B cell (primary cell): ENCODE measurements at regions of chr1 and their contacts with region 1.

Region 1: DNA sequence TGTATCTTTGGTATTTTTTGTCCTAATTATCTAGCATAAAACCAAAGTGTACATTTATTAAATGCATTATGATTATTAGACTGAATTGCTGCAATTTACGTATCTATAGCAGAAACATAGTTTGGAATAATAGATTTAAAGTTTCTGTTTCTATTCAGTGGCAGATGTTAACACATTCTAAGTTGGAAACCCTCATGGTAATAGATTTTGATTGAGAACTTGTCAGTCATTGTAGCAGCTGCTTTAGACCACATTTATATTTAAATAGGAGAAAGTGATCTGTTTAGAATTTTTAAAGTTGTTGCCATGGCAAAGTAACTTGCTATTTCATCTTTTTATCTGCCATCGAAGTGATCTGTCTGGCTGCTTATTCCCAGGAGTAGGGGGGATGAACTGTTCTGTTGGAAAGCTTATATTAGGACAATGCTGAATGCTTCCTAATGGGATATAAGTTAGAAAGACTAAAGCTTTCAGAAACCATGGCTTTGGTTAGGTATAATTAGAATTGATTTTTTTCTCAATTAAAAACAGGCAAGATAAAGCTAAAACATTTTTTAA is 61.6 kb downstream of the HS2ST1 start:
- DNase-seq: no peak
- ATAC-seq: no peak
- H3K4me3 ChIP-seq: no peak overlapping the region
- H3K4me3 Mint-ChIP-seq: no peak overlapping the region
- H3K27ac ChIP-seq: no peak overlapping the region
- H3K27ac Mint-ChIP-seq: no peak overlapping the region
- H3K4me1 ChIP-seq: no peaks in the 10 kb centered on the region
- H3K4me1 Mint-ChIP-seq: peaks cover 11% of the 10 kb centered on the region
- H3K27me3 ChIP-seq: no peaks in the 10 kb centered on the region
- H3K27me3 Mint-ChIP-seq: no peaks in the 10 kb centered on the region
- CTCF ChIP-seq: no peak

Region 2: GRCh38 chr1:86866665-86867064 is 109.4 kb before region 1 on chr1:
- CTCF ChIA-PET with region 1: no interaction called
- POLR2A ChIA-PET with region 1: no interaction called
- intact Hi-C with region 1: no loop called
- DNase-seq: no peak
- ATAC-seq: peak; percentile 19
- H3K4me3 ChIP-seq: peak overlapping the region in 1 of 5 experiments; percentile 41
- H3K4me3 Mint-ChIP-seq: peak overlapping the region; percentile 78
- H3K27ac ChIP-seq: peak overlapping the region; percentile 37 to 74
- H3K27ac Mint-ChIP-seq: peak overlapping the region; percentile 92
- H3K4me1 ChIP-seq: peaks cover 20 to 27% of the 10 kb centered on the region in 2 donors
- H3K4me1 Mint-ChIP-seq: peaks cover 42% of the 10 kb centered on the region
- H3K27me3 ChIP-seq: no peaks in the 10 kb centered on the region
- H3K27me3 Mint-ChIP-seq: no peaks in the 10 kb centered on the region
- CTCF ChIP-seq: no peak

Region 3: DNA sequence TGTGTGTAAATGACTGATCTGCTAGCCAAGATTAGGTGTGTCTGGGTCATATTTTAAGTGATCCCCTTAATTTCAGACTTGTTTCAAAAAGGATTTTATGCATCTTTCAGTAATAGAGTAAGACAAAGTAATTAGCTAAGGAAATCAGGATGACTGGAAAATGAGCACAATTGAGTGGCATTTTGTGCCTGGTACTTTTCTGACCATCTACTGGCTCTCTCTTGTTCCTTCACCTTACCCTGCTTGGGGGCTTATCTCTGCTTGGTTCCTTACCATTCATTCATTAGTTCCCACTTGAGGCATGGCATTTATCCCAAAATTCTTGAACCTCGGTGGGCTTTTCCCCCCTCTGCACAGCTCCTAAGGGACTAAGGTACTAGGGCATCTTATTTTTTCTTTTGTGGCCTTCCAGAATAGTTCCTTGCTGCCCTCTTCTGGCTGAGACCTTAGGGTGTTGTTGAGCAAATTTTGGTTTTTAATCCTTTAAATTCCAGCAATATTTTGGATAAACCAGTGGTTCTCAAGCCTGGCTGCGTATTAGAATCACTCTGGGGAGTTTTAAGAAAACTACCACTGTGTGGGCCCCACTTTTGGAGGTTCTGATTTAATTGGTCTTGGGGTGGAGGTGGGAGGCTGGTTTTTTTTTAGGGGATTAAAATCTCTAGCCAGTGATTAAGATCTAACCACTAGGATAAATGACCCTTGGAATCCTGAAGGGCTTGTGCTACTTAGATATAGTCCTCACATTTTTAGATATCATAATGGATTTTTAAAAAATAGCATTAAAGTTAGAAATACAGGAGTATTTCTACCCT is 10.9 kb before region 1 on chr1:
- CTCF ChIA-PET with region 1: interaction called, 11 read pairs
- POLR2A ChIA-PET with region 1: no interaction called
- intact Hi-C with region 1: no loop called
- DNase-seq: peak; percentile 48
- ATAC-seq: peak; percentile 28
- H3K4me3 ChIP-seq: no peak overlapping the region
- H3K4me3 Mint-ChIP-seq: no peak overlapping the region
- H3K27ac ChIP-seq: no peak overlapping the region
- H3K27ac Mint-ChIP-seq: peak overlapping the region; percentile 59
- H3K4me1 ChIP-seq: peaks cover 0 to 9% of the 10 kb centered on the region in 2 donors
- H3K4me1 Mint-ChIP-seq: peaks cover 19% of the 10 kb centered on the region
- H3K27me3 ChIP-seq: no peaks in the 10 kb centered on the region
- H3K27me3 Mint-ChIP-seq: no peaks in the 10 kb centered on the region
- CTCF ChIP-seq: peak; percentile 60

Region 4: DNA sequence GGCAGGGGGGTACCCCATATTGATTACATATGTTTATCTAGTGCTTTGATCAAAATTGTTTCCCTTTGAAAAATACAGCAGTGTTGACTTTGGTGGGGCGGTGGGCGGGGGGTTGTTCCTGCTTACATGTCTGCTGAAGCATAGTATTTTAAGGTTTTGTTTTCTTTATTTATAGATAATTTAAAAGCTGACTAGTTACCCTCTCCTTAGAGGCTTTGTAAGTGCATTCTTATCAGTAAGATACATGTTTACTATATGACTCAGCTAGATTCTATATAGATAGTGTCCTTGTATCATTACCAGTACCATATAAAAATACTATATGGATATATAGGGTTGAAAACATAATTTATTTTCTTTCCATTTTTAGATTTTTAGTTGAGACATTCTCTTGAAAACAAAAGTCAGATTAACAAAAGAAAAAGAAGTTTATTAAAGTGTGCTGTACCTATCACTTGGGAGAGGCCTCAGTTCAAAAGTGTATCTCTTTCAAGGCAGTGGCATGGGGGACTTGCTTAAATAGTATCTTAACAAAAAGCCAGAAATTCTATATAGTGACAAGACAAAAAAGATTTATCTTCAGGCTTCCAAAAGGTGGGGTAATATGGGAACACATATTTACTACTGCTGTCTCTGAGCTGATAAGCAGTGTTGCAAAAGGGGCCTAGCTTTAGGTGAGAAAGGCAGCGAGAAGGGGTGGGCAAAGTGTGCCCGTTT is 17.4 kb after region 1 on chr1:
- CTCF ChIA-PET with region 1: interaction called, 3 read pairs
- POLR2A ChIA-PET with region 1: no interaction called
- intact Hi-C with region 1: loop called (anchors 2 kb)
- DNase-seq: no peak
- ATAC-seq: no peak
- H3K4me3 ChIP-seq: no peak overlapping the region
- H3K4me3 Mint-ChIP-seq: no peak overlapping the region
- H3K27ac ChIP-seq: no peak overlapping the region
- H3K27ac Mint-ChIP-seq: no peak overlapping the region
- H3K4me1 ChIP-seq: no peaks in the 10 kb centered on the region
- H3K4me1 Mint-ChIP-seq: peaks cover 7% of the 10 kb centered on the region
- H3K27me3 ChIP-seq: no peaks in the 10 kb centered on the region
- H3K27me3 Mint-ChIP-seq: no peaks in the 10 kb centered on the region
- CTCF ChIP-seq: no peak

Region 5: GRCh38 chr1:87024936-87025540 is 49.0 kb after region 1 on chr1:
- CTCF ChIA-PET with region 1: no interaction called
- POLR2A ChIA-PET with region 1: no interaction called
- intact Hi-C with region 1: loop called (anchors 5 kb)
- DNase-seq: peak; percentile 33
- ATAC-seq: peak; percentile 21
- H3K4me3 ChIP-seq: no peak overlapping the region
- H3K4me3 Mint-ChIP-seq: no peak overlapping the region
- H3K27ac ChIP-seq: no peak overlapping the region
- H3K27ac Mint-ChIP-seq: no peak overlapping the region
- H3K4me1 ChIP-seq: peaks cover 0 to 4% of the 10 kb centered on the region in 2 donors
- H3K4me1 Mint-ChIP-seq: peaks cover 32% of the 10 kb centered on the region
- H3K27me3 ChIP-seq: no peaks in the 10 kb centered on the region
- H3K27me3 Mint-ChIP-seq: no peaks in the 10 kb centered on the region
- CTCF ChIP-seq: no peak